H1 (cell line): ENCODE measurements at regions of chr16 and their contacts with region 1.

Region 1: GRCh38 chr16:3012828-3013420 is at the start of gene CLDN9:
- DNase-seq: peak in 1 of 2 experiments; percentile 82
- H3K4me3 ChIP-seq: peak within 1 kb of the TSS; percentile 32 to 58 (median 46)
- H3K27ac ChIP-seq: no peak within 1 kb of the TSS
- H3K4me1 ChIP-seq: peaks cover 14 to 63% (median 50%) of the 10 kb centered on the region in 4 experiments
- H3K27me3 ChIP-seq: no peaks in the 10 kb centered on the region; a peak in 1 of 7 replicates
- CTCF ChIP-seq: no peak
- EP300 ChIP-seq: no peak
- POLR2A ChIP-seq: no peak
- RAD21 ChIP-seq: no peak
- total RNA-seq, gene CLDN9: 0.60 and 0.77 TPM in 2 replicates

Region 2: DNA sequence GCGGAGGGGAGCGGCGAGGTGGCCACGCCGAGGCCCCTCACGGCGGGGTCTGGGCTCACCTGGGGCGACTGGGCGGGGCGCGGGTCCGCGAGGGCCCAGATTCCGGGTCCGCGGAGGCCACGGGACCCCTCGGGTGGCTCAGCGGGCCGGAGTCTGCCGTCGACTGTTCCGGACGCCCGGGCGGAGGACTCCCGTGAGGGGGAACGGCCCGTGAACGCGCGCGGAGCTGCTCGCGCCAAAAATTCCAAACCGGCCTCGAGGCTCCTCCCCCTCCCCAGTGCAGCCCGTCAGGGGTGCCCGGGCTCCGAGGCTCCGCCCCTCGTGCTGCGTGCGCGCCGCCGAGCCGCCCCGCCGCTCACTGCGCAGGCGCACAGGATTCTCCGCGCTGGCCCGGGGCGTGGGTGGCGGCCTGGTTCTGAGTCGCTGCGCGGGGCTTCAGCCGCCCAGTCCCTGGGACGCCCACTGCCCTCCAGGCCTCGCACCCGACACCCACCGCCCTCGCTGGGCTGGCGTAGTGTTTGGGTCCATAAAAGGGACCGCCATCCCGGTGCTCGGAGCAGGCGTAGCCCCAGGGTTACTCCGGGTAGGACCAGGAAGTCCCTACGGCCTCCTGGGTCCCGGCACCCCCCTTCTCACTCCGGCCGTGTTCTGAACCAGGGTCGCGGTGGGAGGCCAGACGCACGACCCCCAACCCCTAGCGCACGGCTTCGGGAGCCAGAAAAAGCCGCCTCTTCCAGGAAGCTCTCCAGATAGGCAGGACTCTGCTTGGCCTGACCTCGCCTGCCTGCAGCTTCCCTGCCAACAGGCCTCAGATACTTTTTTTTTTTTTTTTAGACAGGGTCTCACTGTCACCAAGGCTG is 32.5 kb before region 1 on chr16 and contains the start of gene PKMYT1:
- CTCF ChIA-PET with region 1: interaction called, 7 read pairs
- POLR2A ChIA-PET with region 1: interaction called, 455 read pairs
- DNase-seq: peak in 1 of 2 experiments; percentile 95
- H3K4me3 ChIP-seq: peak within 1 kb of the TSS; percentile 68 to 79 (median 73)
- H3K27ac ChIP-seq: peak within 1 kb of the TSS; percentile 91
- H3K4me1 ChIP-seq: peaks cover 3 to 23% (median 14%) of the 10 kb centered on the region in 4 experiments
- H3K27me3 ChIP-seq: no peaks in the 10 kb centered on the region; a peak in 1 of 7 replicates
- CTCF ChIP-seq: no peak
- EP300 ChIP-seq: no peak
- POLR2A ChIP-seq: peak in 1 of 2 experiments; percentile 79; a peak in 2 of 3 replicates
- RAD21 ChIP-seq: no peak
- total RNA-seq, gene PKMYT1: 74.7 and 83.6 TPM in 2 replicates

Region 3: DNA sequence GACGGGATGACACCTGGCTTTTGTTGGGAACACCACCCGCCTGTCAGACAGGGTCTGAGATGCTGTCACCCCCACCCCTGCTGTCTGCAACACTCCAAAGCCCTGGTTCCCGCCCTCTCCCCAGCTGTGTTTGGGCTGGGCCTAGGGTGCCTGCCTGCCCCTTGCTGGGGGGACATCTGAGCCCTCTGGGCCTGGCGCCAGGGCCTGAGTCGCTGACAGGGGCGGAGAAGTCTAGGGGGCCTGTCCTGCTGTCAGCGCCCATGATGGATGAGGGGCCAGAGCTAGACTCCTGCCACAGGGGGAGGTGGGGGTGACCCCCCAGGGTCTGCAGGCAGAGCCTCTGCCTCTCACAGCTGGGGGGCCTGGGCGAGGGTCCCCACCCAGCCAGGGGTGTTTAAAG is 25.1 kb before region 1 on chr16:
- CTCF ChIA-PET with region 1: interaction called, 4 read pairs
- POLR2A ChIA-PET with region 1: interaction called, 455 read pairs
- DNase-seq: no peak
- H3K4me3 ChIP-seq: no peak overlapping the region
- H3K27ac ChIP-seq: no peak overlapping the region
- H3K4me1 ChIP-seq: peaks cover 3 to 28% (median 23%) of the 10 kb centered on the region in 4 experiments
- H3K27me3 ChIP-seq: no peaks in the 10 kb centered on the region; a peak in 1 of 7 replicates
- CTCF ChIP-seq: no peak
- EP300 ChIP-seq: no peak
- POLR2A ChIP-seq: no peak
- RAD21 ChIP-seq: no peak

Region 4: DNA sequence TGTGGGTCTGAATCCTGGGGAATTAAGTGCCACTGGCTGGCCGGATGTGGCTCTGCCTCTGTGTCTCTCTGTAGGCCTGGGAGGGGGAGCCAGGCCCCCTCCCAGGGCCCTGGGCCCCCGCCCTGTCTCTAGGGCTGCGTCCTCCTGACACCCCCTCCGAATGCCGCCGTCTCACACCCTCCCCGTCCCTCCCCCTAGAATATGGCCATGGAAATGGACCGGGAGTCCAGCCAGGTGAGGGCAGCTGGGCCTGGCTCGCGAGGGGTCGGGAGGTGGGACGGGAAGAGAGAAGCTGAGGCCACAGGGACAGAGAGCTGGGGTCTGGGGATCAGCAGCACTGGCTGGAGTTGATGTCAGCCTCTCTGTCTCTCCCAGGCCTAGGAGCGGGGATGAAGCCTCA is 16.6 kb before region 1 on chr16:
- CTCF ChIA-PET with region 1: interaction called, 639 read pairs
- POLR2A ChIA-PET with region 1: interaction called, 1,808 read pairs
- DNase-seq: no peak
- H3K4me3 ChIP-seq: no peak overlapping the region
- H3K27ac ChIP-seq: no peak overlapping the region; the same call in 1 of the 2 replicates
- H3K4me1 ChIP-seq: peaks cover 0 to 27% (median 7%) of the 10 kb centered on the region in 4 experiments; a peak in 6 of 7 replicates
- H3K27me3 ChIP-seq: no peaks in the 10 kb centered on the region
- CTCF ChIP-seq: no peak
- EP300 ChIP-seq: no peak
- POLR2A ChIP-seq: no peak
- RAD21 ChIP-seq: no peak

Region 5: DNA sequence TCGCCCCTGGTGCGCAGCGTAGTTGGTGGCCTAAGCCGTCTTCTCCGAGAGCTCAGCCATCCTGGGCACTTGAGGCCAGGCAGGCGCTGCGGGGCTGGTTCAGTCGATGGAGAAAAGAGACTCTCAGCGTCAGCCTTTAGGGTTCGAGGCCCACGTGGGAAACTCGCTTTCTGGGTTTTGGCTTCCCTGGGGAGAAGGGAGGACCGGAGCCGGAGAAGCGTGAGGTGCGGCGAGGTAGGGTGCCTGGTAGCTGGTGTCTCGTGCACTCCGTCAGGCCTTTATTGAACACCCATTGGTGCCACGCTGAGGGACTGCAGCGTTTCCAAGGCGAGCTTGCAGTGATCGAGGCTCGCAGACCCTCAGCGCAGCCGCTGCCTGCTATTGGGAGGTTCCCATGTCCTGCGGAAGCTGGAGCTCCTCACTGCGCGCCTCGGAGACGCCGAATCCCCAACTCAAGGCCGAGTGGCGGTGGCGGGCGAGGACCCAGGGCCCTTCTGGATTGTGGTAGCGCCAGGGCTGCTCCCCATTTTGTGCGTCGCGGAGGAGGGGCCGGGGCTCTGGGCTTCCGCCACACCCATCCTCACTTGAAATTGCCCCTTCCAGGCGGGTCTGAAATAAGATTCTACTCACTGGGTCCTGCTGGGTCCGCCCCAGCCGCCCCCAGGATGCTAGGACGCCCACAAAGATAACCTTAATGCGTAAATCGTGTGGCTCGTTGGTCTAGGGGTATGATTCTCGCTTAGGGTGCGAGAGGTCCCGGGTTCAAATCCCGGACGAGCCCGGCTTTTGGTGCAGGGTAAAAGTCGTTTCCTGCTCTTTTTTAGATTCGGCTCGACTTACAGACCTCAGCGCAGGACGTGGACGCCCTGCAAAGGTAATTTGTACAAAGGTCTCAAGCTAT is 176.3 kb after region 1 on chr16:
- CTCF ChIA-PET with region 1: no interaction called
- POLR2A ChIA-PET with region 1: no interaction called
- DNase-seq: peak in 1 of 2 experiments; percentile 96
- H3K4me3 ChIP-seq: peak overlapping the region; percentile 93 to 99 (median 94)
- H3K27ac ChIP-seq: no peak overlapping the region
- H3K4me1 ChIP-seq: peaks cover 0 to 5% (median 0%) of the 10 kb centered on the region in 4 experiments; a peak in 2 of 7 replicates
- H3K27me3 ChIP-seq: peaks cover 5 to 17% (median 14%) of the 10 kb centered on the region in 4 experiments
- CTCF ChIP-seq: no peak
- EP300 ChIP-seq: no peak
- POLR2A ChIP-seq: no peak
- RAD21 ChIP-seq: no peak

Region 6: DNA sequence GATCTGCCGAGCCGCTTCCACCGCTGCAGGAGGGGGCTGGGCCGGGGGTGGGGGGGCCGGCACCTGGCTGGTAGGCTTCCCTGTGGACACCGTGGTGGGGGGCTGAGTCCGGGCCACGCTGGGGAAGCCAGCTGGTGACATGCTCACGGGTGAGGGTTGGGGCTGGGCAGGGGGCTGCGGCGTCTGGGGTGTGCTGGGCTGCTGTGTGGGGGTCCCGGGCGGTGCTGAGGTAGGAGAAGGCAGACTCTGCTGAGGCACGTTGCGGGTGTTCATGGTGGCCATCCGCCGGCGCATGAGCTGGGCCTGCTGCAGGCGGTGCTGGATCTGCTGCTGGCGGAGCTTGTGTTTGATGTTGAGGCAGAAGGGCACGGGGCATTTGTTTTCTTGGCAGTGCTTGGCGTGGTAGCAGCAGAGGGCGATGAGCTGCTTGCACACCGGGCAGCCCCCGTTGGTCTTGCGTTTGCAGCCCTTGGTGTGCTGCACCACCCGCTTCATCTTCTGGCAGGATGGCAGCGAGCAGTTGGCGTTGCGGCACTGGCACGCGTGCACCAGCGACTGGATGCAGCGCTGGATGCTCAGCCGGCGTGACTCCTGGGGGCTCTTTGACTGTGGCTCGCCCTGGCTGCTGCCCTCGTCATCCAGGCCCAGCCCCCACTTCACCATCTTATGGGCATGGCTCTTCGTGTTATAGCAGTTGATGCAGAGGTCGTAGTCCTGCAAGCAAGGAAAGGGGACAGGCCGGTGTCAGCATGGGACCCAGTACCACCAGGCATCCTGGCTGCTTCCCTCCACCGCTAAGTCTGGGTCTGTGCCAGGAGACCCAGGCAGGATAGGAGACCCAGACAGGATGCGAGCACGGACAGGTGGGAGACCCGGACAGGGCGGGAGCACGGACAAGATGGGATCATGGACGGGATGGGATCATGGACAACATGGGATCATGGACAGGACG is 716.5 kb after region 1 on chr16:
- CTCF ChIA-PET with region 1: no interaction called
- POLR2A ChIA-PET with region 1: no interaction called
- DNase-seq: no peak
- H3K4me3 ChIP-seq: no peak overlapping the region
- H3K27ac ChIP-seq: no peak overlapping the region
- H3K4me1 ChIP-seq: no peaks in the 10 kb centered on the region
- H3K27me3 ChIP-seq: no peaks in the 10 kb centered on the region
- CTCF ChIP-seq: no peak
- EP300 ChIP-seq: no peak
- POLR2A ChIP-seq: no peak
- RAD21 ChIP-seq: no peak